Dorsolateral prefrontal cortex (tissue), 120 donors: ENCODE measurements at regions of chr10 and their contacts with region 1.

Region 1: GRCh38 chr10:290026-290725 is 154.9 kb downstream of the ZMYND11 start:
- DNase-seq: no peak
- H3K4me3 ChIP-seq: no peak overlapping the region
- H3K27ac ChIP-seq: peak overlapping the region in 18 of 59 donors; percentile 7 to 63 (median 28)
- H3K27me3 ChIP-seq: no peaks in the 10 kb centered on the region
- CTCF ChIP-seq: no peak

Region 2: DNA sequence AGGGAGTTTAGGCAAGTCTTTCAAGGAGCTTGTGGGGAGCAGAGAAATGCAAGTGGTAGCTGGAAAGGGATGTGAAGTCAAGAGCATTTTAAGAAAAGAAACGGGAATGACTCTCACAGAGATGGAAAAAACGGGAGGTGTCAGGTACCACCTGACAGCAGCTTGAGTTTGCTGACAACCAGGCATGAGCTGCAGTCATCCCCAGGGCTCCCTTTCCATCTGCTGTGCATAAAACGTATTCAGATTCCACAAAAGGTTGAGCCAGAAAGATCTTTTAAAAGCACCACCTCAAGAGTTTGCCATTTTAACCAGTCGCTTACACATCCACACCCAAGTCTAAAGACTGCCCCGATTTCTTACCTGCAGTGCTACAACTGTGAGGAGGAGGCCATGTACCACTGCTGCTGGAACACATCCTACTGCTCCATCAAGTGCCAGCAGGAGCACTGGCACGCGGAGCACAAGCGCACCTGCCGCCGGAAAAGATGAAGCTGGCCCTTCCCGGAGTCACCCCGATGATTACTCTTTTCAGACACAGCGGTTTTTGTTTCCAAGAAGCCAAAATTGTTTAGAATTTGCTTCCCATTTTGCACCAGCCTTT is 38.1 kb before region 1 on chr10:
- intact Hi-C with region 1: loop called in 1 of 2 experiments (anchors 5 kb)
- DNase-seq: peak in 1 of 10 donors; percentile 73
- H3K4me3 ChIP-seq: no peak overlapping the region
- H3K27ac ChIP-seq: peak overlapping the region in 1 of 59 donors; percentile 31
- H3K27me3 ChIP-seq: no peaks in the 10 kb centered on the region
- CTCF ChIP-seq: no peak

Region 3: GRCh38 chr10:329361-330099 is 39.4 kb after region 1 on chr10:
- intact Hi-C with region 1: loop called in 1 of 2 experiments (anchors 5 kb)
- DNase-seq: peak; percentile 49 to 90 (median 78)
- H3K4me3 ChIP-seq: peak overlapping the region in 8 of 59 donors; percentile 0 to 26 (median 12)
- H3K27ac ChIP-seq: peak overlapping the region in 45 of 59 donors; percentile 6 to 71 (median 56)
- H3K27me3 ChIP-seq: no peaks in the 10 kb centered on the region
- CTCF ChIP-seq: peak in 21 of 56 donors; percentile 1 to 37 (median 19)